HepG2 (cell line): ENCODE measurements at regions of chr17 and their contacts with region 1.

Region 1: GRCh38 chr17:14203388-14203787 is 33.3 kb downstream of the CDRT15 start:
- DNase-seq: no peak
- ATAC-seq: no peak; the same call in 2 of the 3 replicates
- H3K4me3 ChIP-seq: no peak overlapping the region
- H3K27ac ChIP-seq: no peak overlapping the region
- H3K4me1 ChIP-seq: peaks cover 4% of the 10 kb centered on the region; the same call in 1 of the 2 replicates
- H3K27me3 ChIP-seq: no peaks in the 10 kb centered on the region
- CTCF ChIP-seq: no peak
- EP300 ChIP-seq: no peak
- POLR2A ChIP-seq: no peak
- RAD21 ChIP-seq: no peak

Region 2: GRCh38 chr17:14276535-14277250 is 73.3 kb after region 1 on chr17:
- CTCF ChIA-PET with region 1: no interaction called
- POLR2A ChIA-PET with region 1: no interaction called
- in situ Hi-C with region 1: no loop called
- intact Hi-C with region 1: loop called (anchors 10 kb)
- DNase-seq: peak; percentile 84
- ATAC-seq: peak; percentile 91
- H3K4me3 ChIP-seq: no peak overlapping the region
- H3K27ac ChIP-seq: peak overlapping the region; percentile 39
- H3K4me1 ChIP-seq: peaks cover 37% of the 10 kb centered on the region
- H3K27me3 ChIP-seq: peaks cover 0 to 8% of the 10 kb centered on the region in 2 experiments; a peak in 3 of 5 replicates
- CTCF ChIP-seq: no peak
- EP300 ChIP-seq: peak in 1 of 2 experiments; percentile 79; a peak in 1 of 4 replicates
- POLR2A ChIP-seq: no peak
- RAD21 ChIP-seq: no peak